ENCODE measurements at regions of chr17 and their contacts with region 1.

Region 1: DNA sequence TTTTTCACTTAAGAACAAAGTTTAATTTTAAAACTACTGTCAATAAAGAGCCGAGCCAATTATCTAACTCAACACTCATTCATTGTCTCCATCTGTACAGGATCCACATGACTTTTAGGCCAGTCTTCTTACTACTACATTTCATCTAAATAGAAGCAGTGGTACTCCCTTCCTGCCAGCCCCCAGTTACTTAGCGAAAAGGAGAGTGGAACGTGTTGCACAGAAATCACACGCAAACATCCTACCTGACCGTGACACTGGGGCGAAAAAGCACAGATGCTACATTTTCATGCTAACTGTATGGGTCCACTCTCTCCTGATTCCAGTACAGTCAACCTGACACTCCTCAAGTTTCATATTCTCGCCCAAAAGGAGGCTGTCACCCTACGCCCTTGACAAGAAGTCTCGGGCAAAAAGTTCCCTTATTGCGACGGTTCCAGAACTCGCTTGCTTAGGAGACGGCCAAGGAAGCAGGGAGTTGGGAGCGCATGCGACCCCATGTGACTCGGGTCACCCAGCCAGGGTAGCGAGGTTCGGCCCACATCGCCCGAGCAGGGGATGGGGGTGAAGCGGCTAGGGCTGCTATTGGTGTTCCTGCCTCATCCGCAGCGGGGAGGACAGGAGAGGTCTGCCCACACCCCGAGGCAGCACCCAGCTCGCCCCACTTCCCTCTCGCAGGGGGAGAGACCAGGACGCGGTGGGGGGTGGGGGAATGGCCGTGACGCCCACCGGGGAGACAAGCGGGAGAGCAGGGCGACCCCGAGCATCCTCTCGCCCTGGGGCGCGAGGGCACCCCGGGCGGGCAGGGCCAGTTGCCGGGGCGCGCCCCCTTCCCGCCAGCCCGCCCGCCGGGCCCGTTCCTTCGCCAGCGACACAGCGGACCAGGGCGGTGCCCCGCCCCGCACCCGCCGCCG is 935 bp downstream of the GNA13 start:
- DNase-seq: peak; percentile 22 to 67 (median 46)
- ATAC-seq: peak; percentile 33 to 36
- H3K4me3 Mint-ChIP-seq: peak overlapping the region; percentile 91 to 98 (median 95)
- H3K27ac Mint-ChIP-seq: peak overlapping the region; percentile 88 to 99 (median 96)
- H3K4me1 Mint-ChIP-seq: peaks cover 19 to 57% (median 49%) of the 10 kb centered on the region in 4 donors
- H3K27me3 Mint-ChIP-seq: no peaks in the 10 kb centered on the region

Region 2: GRCh38 chr17:64984851-64985521 is 70.6 kb before region 1 on chr17:
- POLR2A ChIA-PET with region 1: interaction called, 28 read pairs
- DNase-seq: peak in 9 of 10 donors; percentile 17 to 74 (median 67)
- ATAC-seq: peak; percentile 60 to 61
- H3K4me3 Mint-ChIP-seq: peak overlapping the region; percentile 72 to 92 (median 84)
- H3K27ac Mint-ChIP-seq: peak overlapping the region; percentile 97 to 100 (median 99)
- H3K4me1 Mint-ChIP-seq: peaks cover 22 to 59% (median 33%) of the 10 kb centered on the region in 4 donors
- H3K27me3 Mint-ChIP-seq: no peaks in the 10 kb centered on the region

Region 3: DNA sequence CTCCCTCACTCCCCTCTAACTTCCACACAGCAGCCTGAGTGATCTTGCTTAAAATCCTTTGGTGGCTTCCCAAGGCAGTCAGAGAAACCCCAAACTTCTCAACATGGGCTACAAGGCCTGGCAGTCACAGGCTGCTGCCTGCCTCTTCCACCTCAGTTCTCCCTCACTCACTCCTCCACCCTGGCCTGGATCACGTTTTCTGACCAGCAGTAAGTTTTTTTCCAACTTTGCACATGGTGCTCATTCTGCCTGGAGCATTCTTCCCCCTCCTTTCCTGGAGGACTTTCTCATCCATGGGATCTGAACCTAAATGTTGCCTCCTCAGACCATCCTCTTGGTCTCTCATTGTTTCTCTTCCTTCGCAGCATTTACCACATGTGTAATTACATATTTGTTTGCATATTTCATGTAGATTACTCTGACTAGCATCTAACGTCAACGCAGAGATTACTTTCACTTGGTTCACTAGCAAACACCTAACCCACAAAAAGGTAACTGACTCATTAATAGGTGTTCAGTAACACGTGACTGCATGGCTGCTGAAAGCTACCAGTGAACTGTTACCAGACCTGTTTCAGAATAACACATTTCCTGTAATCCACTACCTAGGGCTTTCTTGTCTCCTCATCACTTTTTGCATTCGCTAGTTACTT is 16.1 kb before region 1 on chr17:
- POLR2A ChIA-PET with region 1: interaction called, 11 read pairs
- DNase-seq: peak in 9 of 10 donors; percentile 36 to 75 (median 54)
- ATAC-seq: peak; percentile 92 to 95
- H3K4me3 Mint-ChIP-seq: peak overlapping the region; percentile 55 to 86 (median 76)
- H3K27ac Mint-ChIP-seq: peak overlapping the region; percentile 90 to 99 (median 94)
- H3K4me1 Mint-ChIP-seq: peaks cover 38 to 96% (median 78%) of the 10 kb centered on the region in 4 donors
- H3K27me3 Mint-ChIP-seq: no peaks in the 10 kb centered on the region

Measured in naive thymus-derived CD8-positive, alpha-beta T cell (primary cell).